Posterior cingulate gyrus (tissue), 11 donors: ENCODE measurements at regions of chr13 and their contacts with region 1.

Region 1: GRCh38 chr13:111531505-111531904 is 211.1 kb downstream of the TEX29 start:
- DNase-seq: peak in 5 of 10 donors; percentile 38 to 86 (median 43)

Region 2: GRCh38 chr13:112053744-112054615 is 522.5 kb after region 1 on chr13:
- intact Hi-C with region 1: loop called (anchors 5 kb)
- DNase-seq: peak in 2 of 10 donors; percentile 82

Region 3: DNA sequence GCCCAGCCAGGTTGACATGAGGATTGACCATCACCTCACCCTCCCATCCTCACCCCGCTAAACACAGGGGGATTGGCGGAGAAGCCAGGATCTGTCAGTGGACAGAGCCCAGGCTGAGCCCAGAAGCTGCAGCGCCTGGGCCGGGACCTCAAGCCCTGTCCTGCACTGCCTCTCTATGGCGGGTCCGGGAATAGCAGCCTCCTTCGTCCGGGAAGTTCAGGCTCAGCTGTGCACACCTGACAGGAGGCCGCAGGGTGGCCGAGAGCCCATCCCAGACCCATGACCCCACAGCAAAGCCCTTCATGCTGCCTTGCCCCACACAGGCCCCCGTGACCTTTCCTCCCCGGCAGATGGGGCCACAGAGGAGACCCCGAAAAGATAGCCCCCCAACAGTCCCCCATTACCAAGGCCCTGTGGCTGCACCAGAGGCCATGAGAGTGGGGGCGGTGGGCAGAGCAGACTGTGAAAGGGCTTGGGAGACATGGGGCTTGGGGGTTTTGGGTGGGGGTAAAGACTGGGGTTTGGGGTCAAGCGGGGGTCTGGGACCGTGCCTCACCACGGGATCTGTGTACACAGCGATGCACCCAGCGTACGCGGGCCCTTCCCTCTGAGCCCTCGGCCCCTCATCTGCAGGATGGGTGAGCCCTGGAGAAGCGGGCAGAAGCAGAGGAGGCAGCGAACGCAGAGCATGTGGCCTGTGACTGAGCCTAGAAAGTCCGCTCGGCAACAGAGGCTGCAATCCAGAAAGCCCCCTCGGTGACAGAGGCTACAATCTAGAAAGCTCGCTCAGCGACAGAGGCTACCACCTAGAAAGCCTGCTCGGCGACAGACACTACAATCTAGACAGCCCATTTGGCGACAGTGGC is 912.7 kb after region 1 on chr13:
- intact Hi-C with region 1: loop called (anchors 1 kb)
- DNase-seq: peak; percentile 46 to 96 (median 76)